ENCODE measurements at regions of chr5 and their contacts with region 1.

Region 1: DNA sequence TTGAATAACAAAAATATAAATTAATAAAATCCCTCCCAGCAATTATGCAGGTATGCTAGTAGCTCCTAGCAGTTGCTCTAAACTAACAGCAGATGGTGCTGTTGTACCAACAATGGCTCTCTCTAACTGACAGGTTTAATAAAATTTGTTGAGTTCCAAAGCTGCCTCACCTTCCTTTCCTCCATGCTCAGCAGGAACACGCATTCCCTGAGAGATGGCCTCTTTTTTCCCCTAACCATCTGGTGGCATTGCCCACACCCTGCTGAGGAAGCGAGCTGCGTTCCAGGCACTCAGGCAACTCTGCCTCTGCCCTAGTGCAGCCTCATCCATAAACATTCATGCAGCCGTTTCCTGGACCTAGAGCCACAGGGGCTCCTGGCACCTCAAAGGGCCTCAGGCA is 106.2 kb downstream of the KLHL3 start:
- DNase-seq: peak; percentile 32 to 63
- H3K4me3 ChIP-seq: no peak overlapping the region
- H3K4me1 ChIP-seq: no peaks in the 10 kb centered on the region
- H3K27me3 ChIP-seq: no peaks in the 10 kb centered on the region

Region 2: DNA sequence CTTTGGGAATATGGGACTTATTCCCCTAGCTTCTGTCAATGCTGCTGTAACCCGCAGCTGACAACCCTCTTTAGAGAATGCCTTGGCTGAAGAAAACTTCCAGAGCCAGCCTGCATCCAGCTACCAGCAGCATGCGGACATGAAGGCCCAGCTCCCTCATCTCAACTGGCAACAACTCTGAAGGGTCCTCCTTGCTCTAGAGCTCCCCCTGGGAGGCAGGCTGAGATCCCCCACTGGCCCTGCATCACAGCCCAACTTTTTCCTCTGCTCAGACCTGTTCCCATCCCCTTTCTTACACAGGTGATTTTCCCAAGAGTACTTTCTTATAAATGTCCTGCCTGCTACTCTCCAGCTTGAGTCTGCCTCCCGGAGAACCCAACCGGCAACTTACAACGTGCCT is 435.5 kb after region 1 on chr5:
- in situ Hi-C with region 1: loop called (anchors 25 kb)
- DNase-seq: peak in 1 of 2 experiments; percentile 35
- H3K4me3 ChIP-seq: no peak overlapping the region
- H3K4me1 ChIP-seq: no peaks in the 10 kb centered on the region
- H3K27me3 ChIP-seq: no peaks in the 10 kb centered on the region

Measured in HAP-1 (cell line).